ENCODE measurements at regions of chr11 and their contacts with region 1.

Region 1: GRCh38 chr11:62591448-62592145 is at the start of gene TUT1:
- DNase-seq: peak; percentile 83
- H3K4me3 ChIP-seq: peak within 1 kb of the TSS; percentile 77 to 78
- H3K27ac ChIP-seq: peak within 1 kb of the TSS; percentile 86 to 94
- H3K4me1 ChIP-seq: peaks cover 13 to 17% of the 10 kb centered on the region in 2 experiments; a peak in 3 of 4 replicates
- H3K27me3 ChIP-seq: no peaks in the 10 kb centered on the region
- CTCF ChIP-seq: no peak; the same call in 1 of the 2 replicates
- EP300 ChIP-seq: 0 out of 4 replicates have a peak, but pooled peaks of 1 of the 2 experiments have one; percentile 22
- RAD21 ChIP-seq: no peak
- polyA plus RNA-seq, gene TUT1: 27.3 and 30.0 TPM in 2 replicates

Region 2: DNA sequence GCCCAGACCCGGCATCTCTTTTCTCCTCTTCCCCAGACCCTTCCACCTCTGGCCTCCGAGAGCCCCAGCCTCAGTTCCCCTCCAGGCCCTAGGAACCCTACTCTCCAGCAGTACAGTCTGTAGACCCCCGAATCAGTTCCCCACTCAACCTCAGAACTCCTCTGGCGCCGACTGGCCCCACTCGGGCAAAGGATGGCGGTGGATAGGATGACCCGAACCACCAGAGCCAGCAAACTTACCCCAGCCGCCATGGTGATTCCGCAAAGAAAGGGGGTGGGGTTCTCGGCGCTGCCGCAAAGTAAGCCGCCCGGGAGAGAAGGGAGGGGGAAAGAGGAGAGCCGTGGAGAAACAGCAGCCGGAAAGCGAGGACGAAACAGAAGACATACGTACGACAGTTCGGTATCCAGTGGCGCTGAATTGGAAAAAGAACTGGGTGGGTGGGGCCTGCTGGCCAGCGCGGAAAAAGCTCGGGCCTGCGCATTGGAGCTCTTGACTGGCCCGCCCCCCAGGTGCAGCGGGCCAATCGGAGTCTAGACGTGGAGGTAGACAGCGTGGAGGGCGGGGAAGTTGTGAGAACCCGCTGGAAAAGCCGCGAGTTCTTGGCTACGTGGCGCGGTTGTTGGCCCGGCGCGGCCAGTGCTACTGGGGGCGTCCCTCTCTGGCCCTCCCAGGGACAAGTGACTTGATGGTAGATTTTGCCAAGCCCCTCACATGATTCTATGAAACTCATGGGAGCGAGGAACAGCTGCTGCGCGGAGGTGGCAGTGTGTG is 17.8 kb before region 1 on chr11 and contains the start of gene EEF1G:
- CTCF ChIA-PET with region 1: interaction called, 6 read pairs
- POLR2A ChIA-PET with region 1: interaction called, 47 read pairs
- DNase-seq: peak; percentile 99
- H3K4me3 ChIP-seq: peak within 1 kb of the TSS; percentile 83 to 93
- H3K27ac ChIP-seq: peak within 1 kb of the TSS; percentile 83 to 87
- H3K4me1 ChIP-seq: peaks cover 19 to 28% of the 10 kb centered on the region in 2 experiments; a peak in 3 of 4 replicates
- H3K27me3 ChIP-seq: no peaks in the 10 kb centered on the region
- CTCF ChIP-seq: no peak
- EP300 ChIP-seq: peak; percentile 15 to 41; a peak in 2 of 4 replicates
- RAD21 ChIP-seq: no peak
- polyA plus RNA-seq, gene EEF1G: 1,853 and 2,105 TPM in 2 replicates

Region 3: GRCh38 chr11:62621567-62622470 is 30.2 kb after region 1 on chr11 and contains the start of gene B3GAT3:
- CTCF ChIA-PET with region 1: interaction called, 4 read pairs
- POLR2A ChIA-PET with region 1: interaction called, 37 read pairs
- DNase-seq: peak; percentile 99
- H3K4me3 ChIP-seq: peak within 1 kb of the TSS; percentile 77 to 92
- H3K27ac ChIP-seq: peak within 1 kb of the TSS; percentile 78 to 86
- H3K4me1 ChIP-seq: peaks cover 7 to 15% of the 10 kb centered on the region in 2 experiments; a peak in 3 of 4 replicates
- H3K27me3 ChIP-seq: no peaks in the 10 kb centered on the region
- CTCF ChIP-seq: 0 out of 2 replicates have a peak, but pooled peaks have one; percentile 6
- EP300 ChIP-seq: 0 out of 4 replicates have a peak, but pooled peaks of 1 of the 2 experiments have one; percentile 24
- RAD21 ChIP-seq: no peak
- polyA plus RNA-seq, gene B3GAT3: 104 and 116 TPM in 2 replicates

Region 4: DNA sequence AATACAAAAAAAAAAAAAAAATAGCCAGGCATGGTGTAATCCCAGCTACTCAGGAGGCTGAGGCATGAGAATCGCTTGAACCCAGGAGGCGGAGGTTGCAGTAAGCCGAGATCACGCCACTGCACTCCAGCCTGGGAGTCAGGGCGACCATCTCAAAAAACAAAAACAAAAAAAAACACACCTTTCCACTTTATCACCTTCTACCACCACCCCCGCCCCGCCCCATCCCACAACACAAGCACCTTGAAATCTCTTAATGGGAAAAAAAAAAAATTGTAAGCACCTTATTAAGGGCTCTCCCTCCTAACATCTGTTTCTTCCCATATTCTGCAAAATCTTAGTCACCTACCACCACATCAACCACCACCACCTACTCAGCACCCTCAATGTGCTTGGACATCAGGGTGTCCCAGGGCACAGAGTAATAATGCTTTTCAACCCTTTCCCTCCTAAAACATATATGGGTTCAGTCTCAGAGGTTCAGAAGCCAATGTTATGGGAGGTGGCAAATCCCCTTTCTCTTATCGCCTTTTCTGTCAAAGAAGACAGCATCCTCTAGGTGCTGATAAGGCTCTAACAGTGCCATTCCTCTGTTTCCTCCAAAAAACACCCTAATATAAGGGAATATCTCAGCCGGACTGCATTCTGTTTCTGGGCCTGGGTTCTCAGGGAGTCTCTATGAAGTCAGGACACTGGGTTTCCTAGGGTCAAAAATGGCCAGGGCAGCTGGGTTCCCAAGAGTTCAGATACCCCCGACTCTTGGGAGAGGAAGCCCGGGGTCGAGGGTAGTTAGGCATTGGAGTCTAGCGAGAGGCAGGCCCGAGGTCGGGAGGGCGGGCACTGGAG is 60.8 kb after region 1 on chr11:
- CTCF ChIA-PET with region 1: interaction called, 10 read pairs
- POLR2A ChIA-PET with region 1: interaction called, 13 read pairs
- DNase-seq: no peak
- H3K4me3 ChIP-seq: peak overlapping the region; percentile 68 to 88
- H3K27ac ChIP-seq: peak overlapping the region; percentile 67 to 79; a peak in 3 of 4 replicates
- H3K4me1 ChIP-seq: peaks cover 2 to 5% of the 10 kb centered on the region in 2 experiments; a peak in 2 of 4 replicates
- H3K27me3 ChIP-seq: no peaks in the 10 kb centered on the region
- CTCF ChIP-seq: no peak
- EP300 ChIP-seq: no peak
- RAD21 ChIP-seq: no peak

Region 5: GRCh38 chr11:62726915-62727763 is 135.5 kb after region 1 on chr11 and contains the start of gene HNRNPUL2:
- CTCF ChIA-PET with region 1: interaction called, 4 read pairs
- POLR2A ChIA-PET with region 1: interaction called, 18 read pairs
- DNase-seq: peak; percentile 95
- H3K4me3 ChIP-seq: peak within 1 kb of the TSS; percentile 89 to 92
- H3K27ac ChIP-seq: peak within 1 kb of the TSS; percentile 99
- H3K4me1 ChIP-seq: peaks cover 12 to 21% of the 10 kb centered on the region in 2 experiments; a peak in 3 of 4 replicates
- H3K27me3 ChIP-seq: no peaks in the 10 kb centered on the region
- CTCF ChIP-seq: no peak; the same call in 1 of the 2 replicates
- EP300 ChIP-seq: no peak
- RAD21 ChIP-seq: no peak
- polyA plus RNA-seq, gene HNRNPUL2: 31.0 and 33.5 TPM in 2 replicates